Calu3 (cell line): ENCODE measurements at regions of chr6 and their contacts with region 1.

Region 1: GRCh38 chr6:133341607-133342158 is 100.5 kb downstream of the EYA4 start:
- DNase-seq: peak; percentile 63
- H3K4me3 Mint-ChIP-seq: no peak overlapping the region
- H3K27ac Mint-ChIP-seq: no peak overlapping the region
- H3K4me1 Mint-ChIP-seq: peaks cover 30% of the 10 kb centered on the region
- H3K27me3 Mint-ChIP-seq: no peaks in the 10 kb centered on the region
- CTCF ChIP-seq: no peak

Region 2: DNA sequence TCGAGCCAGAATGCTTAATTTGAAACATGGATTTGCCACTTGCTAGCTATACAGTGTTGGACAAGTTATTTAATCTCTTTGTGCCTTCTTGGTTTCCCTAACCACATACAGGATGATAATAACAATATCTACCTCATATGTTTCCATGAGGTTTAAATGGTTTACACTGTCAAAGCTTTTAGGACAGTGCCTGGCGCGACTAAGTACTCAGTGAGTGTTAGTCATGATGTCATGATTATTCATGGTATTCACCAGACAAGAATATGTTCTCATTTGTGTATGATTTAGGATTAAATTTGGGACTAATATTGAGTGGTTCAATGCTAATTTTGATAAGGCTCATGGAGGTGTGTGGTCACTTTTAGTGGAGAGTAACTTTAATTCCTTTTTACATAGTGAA is 66.9 kb after region 1 on chr6:
- CTCF ChIA-PET with region 1: no interaction called
- intact Hi-C with region 1: loop called (anchors 5 kb)
- DNase-seq: no peak
- H3K4me3 Mint-ChIP-seq: no peak overlapping the region
- H3K27ac Mint-ChIP-seq: no peak overlapping the region
- H3K4me1 Mint-ChIP-seq: peaks cover 12% of the 10 kb centered on the region
- H3K27me3 Mint-ChIP-seq: no peaks in the 10 kb centered on the region
- CTCF ChIP-seq: no peak

Region 3: GRCh38 chr6:133428299-133428698 is 86.6 kb after region 1 on chr6:
- CTCF ChIA-PET with region 1: no interaction called
- intact Hi-C with region 1: loop called (anchors 1 kb)
- DNase-seq: peak; percentile 73
- H3K4me3 Mint-ChIP-seq: peak overlapping the region; percentile 47
- H3K27ac Mint-ChIP-seq: peak overlapping the region; percentile 89
- H3K4me1 Mint-ChIP-seq: peaks cover 74% of the 10 kb centered on the region
- H3K27me3 Mint-ChIP-seq: no peaks in the 10 kb centered on the region
- CTCF ChIP-seq: no peak

Region 4: GRCh38 chr6:133528566-133528965 is 186.9 kb after region 1 on chr6:
- CTCF ChIA-PET with region 1: no interaction called
- intact Hi-C with region 1: no loop called
- DNase-seq: no peak
- H3K4me3 Mint-ChIP-seq: no peak overlapping the region
- H3K27ac Mint-ChIP-seq: no peak overlapping the region
- H3K4me1 Mint-ChIP-seq: no peaks in the 10 kb centered on the region
- H3K27me3 Mint-ChIP-seq: no peaks in the 10 kb centered on the region
- CTCF ChIP-seq: no peak

Region 5: GRCh38 chr6:133877116-133877515 is 535.4 kb after region 1 on chr6:
- CTCF ChIA-PET with region 1: no interaction called
- intact Hi-C with region 1: no loop called
- DNase-seq: no peak
- H3K4me3 Mint-ChIP-seq: no peak overlapping the region
- H3K27ac Mint-ChIP-seq: no peak overlapping the region
- H3K4me1 Mint-ChIP-seq: peaks cover 8% of the 10 kb centered on the region
- H3K27me3 Mint-ChIP-seq: peaks cover 16% of the 10 kb centered on the region
- CTCF ChIP-seq: no peak